ENCODE measurements at regions of chr15 and their contacts with region 1.

Region 1: GRCh38 chr15:89740137-89740536 is 10.9 kb downstream of the MESP1 start:
- DNase-seq: no peak
- ATAC-seq: peak; percentile 82 to 96 (median 90)
- H3K4me3 ChIP-seq: no peak overlapping the region
- H3K27ac ChIP-seq: no peak overlapping the region
- H3K4me1 ChIP-seq: no peaks in the 10 kb centered on the region
- H3K27me3 ChIP-seq: no peaks in the 10 kb centered on the region
- CTCF ChIP-seq: peak; percentile 87

Region 2: GRCh38 chr15:89119489-89120123 is 620.5 kb before region 1 on chr15:
- intact Hi-C with region 1: no loop called
- DNase-seq: no peak
- ATAC-seq: no peak
- H3K4me3 ChIP-seq: no peak overlapping the region
- H3K27ac ChIP-seq: peak overlapping the region; percentile 78
- H3K4me1 ChIP-seq: peaks cover 49% of the 10 kb centered on the region
- H3K27me3 ChIP-seq: no peaks in the 10 kb centered on the region
- CTCF ChIP-seq: no peak

Region 3: GRCh38 chr15:89514596-89515406 is 225.3 kb before region 1 on chr15:
- intact Hi-C with region 1: no loop called
- DNase-seq: no peak
- ATAC-seq: no peak
- H3K4me3 ChIP-seq: no peak overlapping the region
- H3K27ac ChIP-seq: no peak overlapping the region
- H3K4me1 ChIP-seq: no peaks in the 10 kb centered on the region
- H3K27me3 ChIP-seq: peaks cover 9 to 15% (median 11%) of the 10 kb centered on the region in 3 donors
- CTCF ChIP-seq: no peak

Region 4: DNA sequence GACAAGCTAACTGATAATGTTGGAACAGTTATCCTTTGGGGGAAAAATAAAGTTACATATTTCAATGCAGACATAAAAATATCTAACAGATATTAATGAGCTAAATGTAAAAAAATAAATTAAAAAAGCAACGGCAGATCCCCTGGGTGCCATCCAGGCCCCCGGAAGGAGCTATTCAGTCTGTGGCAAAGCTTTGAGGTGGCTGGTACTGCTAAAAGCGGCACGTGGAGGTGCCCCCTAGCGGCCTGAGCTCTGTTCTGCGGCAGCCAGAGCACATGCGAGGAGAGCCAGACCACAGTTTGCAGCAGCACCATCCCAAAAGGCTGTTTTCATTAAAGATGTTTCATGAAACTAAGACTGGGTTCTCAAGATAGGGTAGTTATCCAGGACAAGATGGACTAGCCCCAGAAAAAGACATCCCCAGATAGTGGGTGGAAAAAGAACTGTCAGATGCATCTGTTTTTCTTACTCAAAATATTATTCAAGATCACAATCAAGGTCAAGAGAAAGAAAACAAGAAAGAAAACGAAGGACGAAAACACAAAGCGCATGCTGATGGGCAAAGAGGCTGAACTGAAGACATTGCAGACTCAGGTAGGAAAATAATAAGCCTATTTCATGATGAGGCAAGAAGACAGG is 134.9 kb after region 1 on chr15:
- intact Hi-C with region 1: loop called in 1 of 2 experiments (anchors 5 kb)
- DNase-seq: peak; percentile 79 to 90
- ATAC-seq: peak; percentile 92 to 96 (median 95)
- H3K4me3 ChIP-seq: no peak overlapping the region
- H3K27ac ChIP-seq: no peak overlapping the region
- H3K4me1 ChIP-seq: peaks cover 6% of the 10 kb centered on the region
- H3K27me3 ChIP-seq: no peaks in the 10 kb centered on the region
- CTCF ChIP-seq: peak; percentile 94

Region 5: DNA sequence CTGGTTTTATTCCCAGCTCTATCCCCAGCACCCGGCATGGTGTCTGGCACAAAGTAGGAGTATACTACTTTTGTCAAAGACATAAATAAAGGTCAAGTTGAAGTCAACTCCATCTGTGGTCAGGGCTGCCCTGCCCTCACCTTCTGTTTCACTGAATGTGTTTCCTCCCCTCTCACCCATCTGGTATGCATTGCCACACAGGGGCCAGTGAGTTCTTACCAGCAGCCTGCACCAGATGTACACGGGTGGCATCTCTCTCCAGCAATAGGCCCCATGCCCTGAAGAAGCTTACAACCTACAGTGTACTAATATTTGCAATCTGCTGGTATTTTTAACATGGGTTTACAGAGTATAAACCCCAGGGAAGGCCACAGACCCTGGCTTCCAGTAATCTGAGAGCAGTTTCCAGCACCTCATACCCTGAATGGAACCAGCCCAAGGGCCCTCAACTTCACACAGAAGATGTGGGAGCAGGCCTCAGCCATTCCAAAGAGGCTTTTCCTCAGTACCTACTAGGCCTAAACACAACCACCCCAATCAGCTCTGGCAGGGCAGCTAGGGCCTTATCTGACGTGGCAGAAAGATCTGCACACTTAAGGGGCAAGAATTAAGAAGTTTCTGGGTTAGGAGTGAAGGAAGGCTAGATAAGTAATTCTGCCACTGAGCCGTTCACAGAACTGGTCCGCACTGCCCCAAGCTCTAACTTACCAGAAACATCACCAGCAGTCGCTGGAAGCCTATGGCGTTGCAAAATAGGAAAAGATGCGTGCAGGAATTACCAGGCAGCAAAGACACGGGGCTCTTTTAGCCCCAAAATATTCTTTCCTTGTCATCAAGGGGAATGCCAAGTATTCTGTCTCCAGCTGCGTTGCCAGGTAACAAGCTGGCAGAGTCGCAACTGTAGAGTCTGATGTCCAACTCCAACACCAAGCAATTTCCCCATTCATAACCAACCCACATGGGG is 360.0 kb after region 1 on chr15:
- intact Hi-C with region 1: loop called (anchors 10 kb)
- DNase-seq: peak; percentile 54 to 73
- ATAC-seq: peak; percentile 13 to 55 (median 26)
- H3K4me3 ChIP-seq: peak overlapping the region; percentile 95
- H3K27ac ChIP-seq: peak overlapping the region; percentile 100
- H3K4me1 ChIP-seq: peaks cover 78% of the 10 kb centered on the region
- H3K27me3 ChIP-seq: no peaks in the 10 kb centered on the region
- CTCF ChIP-seq: no peak

Region 6: DNA sequence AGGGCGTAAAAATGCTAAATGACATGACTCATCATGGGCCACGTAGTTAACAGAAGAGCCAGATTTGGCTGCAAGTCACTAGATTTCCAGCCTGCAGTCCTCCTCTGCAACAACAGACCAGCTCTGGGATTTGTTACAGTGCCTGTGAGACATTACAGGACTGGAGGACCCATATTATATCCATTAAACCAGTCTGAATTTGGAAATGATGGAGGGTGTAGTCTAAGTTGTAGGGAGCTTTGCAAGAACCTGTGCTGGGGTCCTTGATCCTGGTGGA is 622.7 kb after region 1 on chr15:
- intact Hi-C with region 1: no loop called
- DNase-seq: no peak
- ATAC-seq: peak; percentile 63 to 71 (median 66)
- H3K4me3 ChIP-seq: no peak overlapping the region
- H3K27ac ChIP-seq: peak overlapping the region; percentile 85
- H3K4me1 ChIP-seq: peaks cover 21% of the 10 kb centered on the region
- H3K27me3 ChIP-seq: no peaks in the 10 kb centered on the region
- CTCF ChIP-seq: no peak

Measured in psoas muscle (tissue), 8 donors.